Calu3 (cell line): ENCODE measurements at regions of chr4 and their contacts with region 1.

Region 1: DNA sequence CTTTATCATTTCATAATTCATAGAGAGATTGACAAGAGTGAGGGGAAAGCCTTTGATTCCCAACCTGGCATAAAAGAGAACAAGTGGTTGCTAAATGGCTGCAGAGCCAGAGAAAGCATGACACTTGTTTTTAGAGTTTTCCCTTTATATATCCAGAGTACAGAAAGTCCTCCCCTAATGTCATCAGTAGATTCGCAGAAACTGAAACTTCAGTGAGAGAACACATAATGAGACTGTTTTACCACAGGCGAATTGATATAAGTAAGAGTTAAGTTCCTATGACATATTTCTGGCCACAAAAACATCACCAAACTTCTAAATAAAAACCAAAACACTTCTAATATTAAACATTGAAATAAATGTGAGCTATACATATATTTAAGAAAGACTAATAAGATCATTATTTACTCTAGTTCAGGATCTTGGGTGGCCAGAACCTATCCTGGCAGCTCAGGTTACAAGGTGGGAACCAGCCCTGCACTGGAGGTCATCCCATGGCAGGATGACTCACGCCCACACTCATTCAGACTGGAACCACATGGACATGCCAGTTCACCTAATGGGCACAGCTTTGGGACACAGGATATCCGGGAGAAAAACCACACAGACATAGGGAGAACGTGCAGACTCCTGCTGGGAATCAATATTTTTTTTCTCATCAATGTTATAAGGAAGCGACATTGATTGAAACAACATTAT is 35.5 kb downstream of the NWD2 start:
- DNase-seq: peak; percentile 63
- H3K4me3 Mint-ChIP-seq: peak overlapping the region; percentile 47
- H3K27ac Mint-ChIP-seq: peak overlapping the region; percentile 80
- H3K4me1 Mint-ChIP-seq: peaks cover 23% of the 10 kb centered on the region
- H3K27me3 Mint-ChIP-seq: no peaks in the 10 kb centered on the region
- CTCF ChIP-seq: no peak

Region 2: DNA sequence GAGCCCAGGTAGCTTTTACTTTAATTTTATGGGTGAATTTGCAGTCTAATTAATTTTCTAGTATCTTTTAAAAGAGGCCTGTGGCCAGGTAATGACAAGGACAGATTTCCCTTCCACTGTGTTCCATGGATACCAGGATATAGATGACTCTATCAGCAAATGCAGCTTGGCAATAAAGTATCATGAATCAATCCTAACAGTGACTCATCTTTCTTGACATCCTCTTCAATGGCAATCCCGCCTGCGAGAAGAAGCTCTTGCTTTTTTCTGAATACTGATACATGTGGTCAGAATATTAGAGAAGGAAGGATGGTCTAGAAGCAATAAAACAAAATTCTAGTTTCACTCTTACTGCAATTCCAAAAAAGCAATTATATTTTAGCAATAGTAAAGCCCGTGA is 730.8 kb before region 1 on chr4:
- CTCF ChIA-PET with region 1: no interaction called
- intact Hi-C with region 1: no loop called
- DNase-seq: no peak
- H3K4me3 Mint-ChIP-seq: no peak overlapping the region
- H3K27ac Mint-ChIP-seq: no peak overlapping the region
- H3K4me1 Mint-ChIP-seq: no peaks in the 10 kb centered on the region
- H3K27me3 Mint-ChIP-seq: no peaks in the 10 kb centered on the region
- CTCF ChIP-seq: no peak

Region 3: GRCh38 chr4:37109756-37110155 is 170.3 kb before region 1 on chr4:
- CTCF ChIA-PET with region 1: no interaction called
- intact Hi-C with region 1: no loop called
- DNase-seq: no peak
- H3K4me3 Mint-ChIP-seq: no peak overlapping the region
- H3K27ac Mint-ChIP-seq: no peak overlapping the region
- H3K4me1 Mint-ChIP-seq: no peaks in the 10 kb centered on the region
- H3K27me3 Mint-ChIP-seq: no peaks in the 10 kb centered on the region
- CTCF ChIP-seq: no peak

Region 4: GRCh38 chr4:37324546-37324945 is 44.5 kb after region 1 on chr4:
- CTCF ChIA-PET with region 1: interaction called, 3 read pairs
- intact Hi-C with region 1: loop called (anchors 1 kb)
- DNase-seq: no peak
- H3K4me3 Mint-ChIP-seq: no peak overlapping the region
- H3K27ac Mint-ChIP-seq: no peak overlapping the region
- H3K4me1 Mint-ChIP-seq: peaks cover 47% of the 10 kb centered on the region
- H3K27me3 Mint-ChIP-seq: no peaks in the 10 kb centered on the region
- CTCF ChIP-seq: no peak